ENCODE measurements at regions of chr15 and their contacts with region 1.

Region 1: GRCh38 chr15:75578948-75579920 is at the start of gene PTPN9:
- DNase-seq: peak; percentile 73
- H3K4me3 ChIP-seq: peak within 1 kb of the TSS; percentile 64 to 99 (median 97)
- H3K27ac ChIP-seq: peak within 1 kb of the TSS; percentile 68
- H3K4me1 ChIP-seq: peaks cover 11% of the 10 kb centered on the region
- H3K27me3 ChIP-seq: no peaks in the 10 kb centered on the region
- CTCF ChIP-seq: peak; percentile 16 to 54
- POLR2A ChIP-seq: peak; percentile 34
- total RNA-seq, gene PTPN9: 31.4 and 32.0 TPM in 2 replicates

Region 2: GRCh38 chr15:75453703-75454470 is 125.3 kb before region 1 on chr15:
- CTCF ChIA-PET with region 1: interaction called, 9 read pairs
- POLR2A ChIA-PET with region 1: no interaction called
- dilution Hi-C with region 1: loop called (anchors 25 kb)
- intact Hi-C with region 1: loop called (anchors 2 kb)
- DNase-seq: peak; percentile 100
- H3K4me3 ChIP-seq: peak overlapping the region; percentile 61 to 93 (median 84)
- H3K27ac ChIP-seq: peak overlapping the region; percentile 78
- H3K4me1 ChIP-seq: peaks cover 29% of the 10 kb centered on the region
- H3K27me3 ChIP-seq: no peaks in the 10 kb centered on the region
- CTCF ChIP-seq: no peak
- POLR2A ChIP-seq: peak; percentile 52

Region 3: DNA sequence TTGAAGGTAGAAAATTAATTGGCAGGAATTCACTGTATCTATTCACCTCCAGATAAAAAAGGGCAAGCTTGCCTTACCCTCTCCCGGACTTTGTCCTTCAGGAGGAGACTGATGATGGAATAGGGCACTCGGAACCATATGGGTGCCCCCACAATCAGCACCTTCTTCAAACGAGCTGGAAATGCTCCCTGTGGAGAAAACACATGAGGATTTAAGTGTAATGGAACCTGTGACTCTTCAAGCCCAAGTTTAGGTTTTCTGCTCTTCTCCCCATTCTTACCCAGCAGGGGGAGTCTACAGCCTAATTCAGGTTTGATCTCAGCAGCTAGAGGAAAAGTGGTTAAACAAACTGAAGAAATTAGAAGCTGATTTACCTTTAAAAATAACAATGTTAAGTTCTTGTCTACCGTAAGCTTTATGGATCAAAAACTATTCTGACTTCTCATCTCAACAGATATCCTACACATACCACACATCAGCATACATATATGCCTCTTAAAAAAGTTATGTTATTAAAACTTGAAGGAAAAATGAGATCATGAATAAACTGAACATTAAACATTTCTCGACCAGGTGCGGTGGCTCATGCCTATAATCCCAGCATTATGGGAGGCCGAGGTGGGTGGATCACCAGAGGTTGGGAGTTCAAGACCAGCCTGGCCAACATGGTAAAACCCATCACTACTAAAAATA is 70.2 kb before region 1 on chr15:
- CTCF ChIA-PET with region 1: interaction called, 17 read pairs
- POLR2A ChIA-PET with region 1: no interaction called
- dilution Hi-C with region 1: no loop called
- intact Hi-C with region 1: no loop called
- DNase-seq: peak; percentile 58
- H3K4me3 ChIP-seq: no peak overlapping the region
- H3K27ac ChIP-seq: no peak overlapping the region
- H3K4me1 ChIP-seq: no peaks in the 10 kb centered on the region
- H3K27me3 ChIP-seq: no peaks in the 10 kb centered on the region
- CTCF ChIP-seq: peak; percentile 30 to 61
- POLR2A ChIP-seq: no peak

Region 4: GRCh38 chr15:75517233-75517632 is 62.0 kb before region 1 on chr15:
- CTCF ChIA-PET with region 1: interaction called, 3 read pairs
- POLR2A ChIA-PET with region 1: no interaction called
- dilution Hi-C with region 1: no loop called
- intact Hi-C with region 1: loop called (anchors 2 kb)
- DNase-seq: no peak
- H3K4me3 ChIP-seq: no peak overlapping the region
- H3K27ac ChIP-seq: no peak overlapping the region
- H3K4me1 ChIP-seq: no peaks in the 10 kb centered on the region
- H3K27me3 ChIP-seq: no peaks in the 10 kb centered on the region
- CTCF ChIP-seq: no peak
- POLR2A ChIP-seq: no peak

Region 5: GRCh38 chr15:75532413-75533147 is 46.7 kb before region 1 on chr15:
- CTCF ChIA-PET with region 1: interaction called, 8 read pairs
- POLR2A ChIA-PET with region 1: no interaction called
- dilution Hi-C with region 1: no loop called
- intact Hi-C with region 1: loop called (anchors 2 kb)
- DNase-seq: peak; percentile 91
- H3K4me3 ChIP-seq: no peak overlapping the region
- H3K27ac ChIP-seq: peak overlapping the region; percentile 27
- H3K4me1 ChIP-seq: peaks cover 24% of the 10 kb centered on the region
- H3K27me3 ChIP-seq: no peaks in the 10 kb centered on the region
- CTCF ChIP-seq: peak; percentile 6 to 26
- POLR2A ChIP-seq: no peak

Measured in endothelial cell of umbilical vein (primary cell).